Mammary epithelial cell (primary cell): ENCODE measurements at regions of chr3 and their contacts with region 1.

Region 1: GRCh38 chr3:179015551-179016020 is 56.0 kb downstream of the ZMAT3 start:
- DNase-seq: peak; percentile 75
- H3K4me3 ChIP-seq: no peak overlapping the region
- H3K27ac ChIP-seq: no peak overlapping the region
- H3K4me1 ChIP-seq: no peaks in the 10 kb centered on the region
- H3K27me3 ChIP-seq: no peaks in the 10 kb centered on the region
- CTCF ChIP-seq: peak; percentile 78 to 85

Region 2: GRCh38 chr3:179071550-179072397 is 56.2 kb after region 1 on chr3 and contains the start of gene ZMAT3:
- CTCF ChIA-PET with region 1: interaction called, 15 read pairs
- dilution Hi-C with region 1: no loop called
- in situ Hi-C with region 1: no loop called
- intact Hi-C with region 1: loop called (anchors 1 kb)
- DNase-seq: peak; percentile 80
- H3K4me3 ChIP-seq: peak within 1 kb of the TSS; percentile 54 to 75 (median 74)
- H3K27ac ChIP-seq: peak within 1 kb of the TSS; percentile 94
- H3K4me1 ChIP-seq: peaks cover 22% of the 10 kb centered on the region
- H3K27me3 ChIP-seq: no peaks in the 10 kb centered on the region
- CTCF ChIP-seq: no peak
- total RNA-seq, gene ZMAT3: 31.3 to 56.2 TPM

Region 3: DNA sequence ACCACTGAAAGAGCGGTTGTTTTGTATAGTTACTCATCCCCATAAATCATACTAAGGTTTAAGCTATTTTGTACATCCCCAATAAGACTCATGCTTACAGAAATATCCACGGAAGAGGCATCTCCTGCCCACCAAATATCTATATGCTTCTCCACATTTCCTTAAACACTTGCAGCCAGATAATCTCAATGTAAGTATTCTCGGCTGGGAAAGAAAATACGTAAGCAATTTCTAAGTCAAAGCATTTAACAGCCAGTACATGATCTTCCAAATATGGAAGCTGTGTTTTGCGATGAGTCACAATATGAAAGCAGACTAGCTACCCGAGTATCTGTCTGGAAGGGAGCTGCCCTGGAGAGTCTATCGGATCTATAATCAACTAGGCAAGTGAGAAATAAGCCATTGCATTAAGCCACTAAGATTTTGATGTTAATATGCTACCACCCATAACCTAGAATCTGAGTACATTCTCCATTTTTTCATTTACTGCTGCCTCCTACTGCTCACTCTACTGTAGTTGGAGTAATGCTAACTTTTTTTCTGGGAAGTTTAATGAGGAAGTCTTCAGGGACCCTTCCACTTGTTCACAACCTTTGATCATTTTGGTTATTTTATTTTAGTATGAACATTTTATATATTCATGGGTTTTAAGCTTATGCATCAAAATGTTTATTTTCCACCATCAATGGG is 82.9 kb after region 1 on chr3:
- CTCF ChIA-PET with region 1: interaction called, 4 read pairs
- dilution Hi-C with region 1: no loop called
- in situ Hi-C with region 1: no loop called
- intact Hi-C with region 1: loop called (anchors 2 kb)
- DNase-seq: peak; percentile 72
- H3K4me3 ChIP-seq: no peak overlapping the region
- H3K27ac ChIP-seq: no peak overlapping the region
- H3K4me1 ChIP-seq: peaks cover 5% of the 10 kb centered on the region
- H3K27me3 ChIP-seq: no peaks in the 10 kb centered on the region
- CTCF ChIP-seq: peak in 1 of 2 donors; percentile 19

Region 4: DNA sequence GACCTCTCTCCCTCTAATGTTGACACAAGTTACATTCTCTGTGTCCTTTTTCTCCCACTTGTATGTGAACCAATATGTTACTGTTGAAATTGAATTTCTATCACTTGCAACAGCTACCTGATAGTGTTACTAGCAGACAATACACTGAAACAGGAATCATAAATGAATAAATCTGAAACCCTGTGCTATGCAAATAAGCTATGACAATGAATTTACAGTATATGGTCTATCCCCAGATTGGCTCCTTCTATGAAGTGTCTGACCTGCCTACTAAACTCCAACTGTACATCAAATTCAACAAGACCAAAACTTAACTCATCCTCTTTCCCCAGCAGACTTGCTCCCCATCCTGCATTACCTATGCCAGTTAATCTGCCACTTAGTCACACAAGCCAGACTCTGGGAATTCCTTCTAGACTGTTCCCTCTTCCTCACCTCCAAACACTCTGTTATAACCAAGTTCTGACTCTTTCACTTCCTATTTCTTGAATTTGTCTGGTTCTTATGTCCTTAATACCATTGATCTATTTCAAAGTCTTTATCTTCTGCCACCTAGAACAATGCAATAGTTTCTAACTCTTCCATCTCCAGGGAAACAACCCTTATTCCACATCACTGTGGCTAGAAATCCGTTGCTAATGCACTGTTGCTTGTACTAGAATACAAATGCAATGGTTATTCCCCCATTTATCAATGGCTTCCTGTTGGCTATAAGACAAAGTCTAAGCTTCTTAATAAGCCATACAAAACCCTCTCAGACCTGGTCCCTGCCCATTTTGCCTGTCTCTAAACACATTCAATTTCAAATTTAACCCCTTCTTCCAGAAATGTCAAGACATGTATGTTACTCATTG is 293.9 kb after region 1 on chr3:
- CTCF ChIA-PET with region 1: no interaction called
- dilution Hi-C with region 1: loop called (anchors 25 kb)
- in situ Hi-C with region 1: loop called in 1 of 2 experiments (anchors 10 kb)
- intact Hi-C with region 1: no loop called
- DNase-seq: no peak
- H3K4me3 ChIP-seq: no peak overlapping the region
- H3K27ac ChIP-seq: no peak overlapping the region
- H3K4me1 ChIP-seq: no peaks in the 10 kb centered on the region
- H3K27me3 ChIP-seq: no peaks in the 10 kb centered on the region
- CTCF ChIP-seq: no peak

Region 5: DNA sequence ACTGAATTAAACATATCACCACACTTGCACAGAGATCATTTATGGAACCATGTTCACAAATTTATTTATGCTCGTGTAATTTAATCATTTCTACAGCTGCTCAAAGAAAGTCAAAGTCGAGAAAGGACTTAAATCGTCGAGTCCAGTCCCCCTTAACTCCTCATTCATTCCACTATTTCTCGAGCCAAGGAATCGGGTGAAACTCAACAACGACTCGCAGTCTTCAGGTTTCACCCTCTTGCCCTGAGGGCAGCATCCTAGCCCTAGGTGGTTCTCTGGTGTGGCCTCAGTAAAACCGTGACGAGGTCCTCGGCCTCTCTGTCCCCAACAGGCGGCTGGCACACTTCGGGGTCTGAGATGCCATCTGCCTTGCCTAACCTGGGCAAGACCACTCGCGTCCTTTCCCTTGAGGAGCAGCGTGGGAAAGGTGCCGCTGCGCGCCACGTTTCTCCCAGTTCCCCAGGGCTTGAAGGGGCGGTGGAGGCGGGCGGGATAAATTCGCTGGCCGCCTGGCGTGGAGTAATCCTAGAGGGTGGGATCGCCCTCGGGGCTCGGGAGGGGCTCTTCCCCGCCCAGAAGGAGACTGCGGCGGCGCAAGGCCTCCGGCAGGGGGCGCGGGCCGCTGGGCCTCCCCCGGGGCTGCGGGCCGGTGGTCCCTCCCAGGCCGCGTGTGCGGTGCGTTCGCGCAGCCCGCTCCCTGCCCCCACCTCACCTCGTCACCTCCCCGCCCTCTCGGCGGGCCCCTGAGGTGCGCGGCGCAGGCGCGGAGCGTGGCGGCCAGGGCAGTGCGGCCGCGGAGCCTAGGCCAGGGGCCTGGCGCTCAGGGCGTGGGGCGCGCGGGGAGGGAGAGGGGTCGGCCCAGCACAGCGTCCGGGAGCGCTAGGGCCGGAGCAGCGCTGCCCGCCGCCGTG is 307.0 kb after region 1 on chr3 and contains the start of gene ZNF639:
- CTCF ChIA-PET with region 1: interaction called, 5 read pairs
- dilution Hi-C with region 1: loop called (anchors 25 kb)
- in situ Hi-C with region 1: loop called (anchors 5 to 10 kb)
- intact Hi-C with region 1: no loop called
- DNase-seq: peak; percentile 67
- H3K4me3 ChIP-seq: peak within 1 kb of the TSS; percentile 79 to 96 (median 80)
- H3K27ac ChIP-seq: peak within 1 kb of the TSS; percentile 63
- H3K4me1 ChIP-seq: peaks cover 25% of the 10 kb centered on the region
- H3K27me3 ChIP-seq: no peaks in the 10 kb centered on the region
- CTCF ChIP-seq: peak; percentile 41 to 58
- total RNA-seq, gene ZNF639: 25.3 to 27.7 TPM

Region 6: DNA sequence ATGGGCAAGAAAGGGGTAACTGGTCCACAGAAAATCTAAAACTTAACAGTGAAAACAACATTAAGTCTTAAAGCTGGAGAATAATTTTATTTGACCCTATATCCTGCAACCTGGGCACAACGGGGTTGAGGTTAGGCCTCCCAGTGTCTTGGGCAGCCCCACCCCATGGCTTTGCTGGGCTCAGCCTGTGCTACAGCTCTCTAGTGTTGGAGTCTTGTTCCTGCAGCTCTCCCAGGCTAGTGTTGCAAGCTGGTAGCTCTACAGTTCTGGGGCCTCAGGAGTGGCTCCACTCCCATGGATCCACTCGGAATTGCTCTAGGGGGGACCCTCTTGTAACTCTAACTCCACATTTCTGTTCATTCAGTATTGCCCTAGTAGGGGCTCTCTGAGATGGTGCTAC is 460.6 kb after region 1 on chr3:
- CTCF ChIA-PET with region 1: no interaction called
- dilution Hi-C with region 1: no loop called
- in situ Hi-C with region 1: no loop called
- intact Hi-C with region 1: no loop called
- DNase-seq: no peak
- H3K4me3 ChIP-seq: no peak overlapping the region
- H3K27ac ChIP-seq: no peak overlapping the region
- H3K4me1 ChIP-seq: no peaks in the 10 kb centered on the region
- H3K27me3 ChIP-seq: no peaks in the 10 kb centered on the region
- CTCF ChIP-seq: no peak